Right cardiac atrium (tissue), 5 donors: ENCODE measurements at regions of chr12 and their contacts with region 1.

Region 1: GRCh38 chr12:95217377-95218149 is at the starts of genes FGD6 and VEZT:
- DNase-seq: peak; percentile 99
- ATAC-seq: peak; percentile 97 to 98
- H3K4me3 ChIP-seq: peak within 1 kb of the TSS; percentile 87
- H3K27ac ChIP-seq: peak within 1 kb of the TSS; percentile 87
- H3K4me1 ChIP-seq: no peaks in the 10 kb centered on the region
- H3K27me3 ChIP-seq: no peaks in the 10 kb centered on the region
- total RNA-seq, gene FGD6: 18.9 to 23.8 (median 20.8) TPM
- total RNA-seq, gene VEZT: 58.9 to 78.6 (median 69.9) TPM

Region 2: GRCh38 chr12:95117178-95117599 is 100.4 kb before region 1 on chr12:
- intact Hi-C with region 1: loop called in 2 of 4 experiments (anchors 5 kb)
- DNase-seq: peak in 2 of 3 donors; percentile 61 to 74
- ATAC-seq: peak; percentile 91 to 92
- H3K4me3 ChIP-seq: no peak overlapping the region
- H3K27ac ChIP-seq: no peak overlapping the region
- H3K4me1 ChIP-seq: peaks cover 5% of the 10 kb centered on the region
- H3K27me3 ChIP-seq: no peaks in the 10 kb centered on the region

Region 3: GRCh38 chr12:95151821-95152220 is 65.7 kb before region 1 on chr12:
- intact Hi-C with region 1: loop called in 1 of 4 experiments (anchors 10 kb)
- DNase-seq: no peak
- ATAC-seq: no peak
- H3K4me3 ChIP-seq: no peak overlapping the region
- H3K27ac ChIP-seq: no peak overlapping the region
- H3K4me1 ChIP-seq: no peaks in the 10 kb centered on the region
- H3K27me3 ChIP-seq: no peaks in the 10 kb centered on the region

Region 4: DNA sequence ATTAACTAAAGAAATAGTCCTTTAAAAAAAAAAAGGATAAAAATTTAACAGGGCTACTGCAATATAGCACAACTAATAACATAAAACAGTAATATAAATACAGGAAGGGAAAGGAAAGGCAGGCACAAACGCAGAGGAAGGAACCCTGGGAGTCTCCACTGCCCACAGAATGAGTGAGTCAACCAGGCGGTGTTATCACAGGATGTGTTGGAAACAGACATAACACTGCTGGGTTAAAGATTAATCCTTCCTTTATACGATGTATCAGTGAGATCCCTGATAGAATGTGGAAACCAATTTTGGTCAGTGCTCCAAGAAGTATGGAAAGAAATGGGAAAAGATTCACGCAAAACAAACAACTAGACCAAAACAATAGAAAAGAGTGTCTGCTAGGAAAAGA is 48.2 kb before region 1 on chr12:
- intact Hi-C with region 1: loop called in 2 of 4 experiments (anchors 10 kb)
- DNase-seq: no peak
- ATAC-seq: peak; percentile 68 to 81
- H3K4me3 ChIP-seq: no peak overlapping the region
- H3K27ac ChIP-seq: no peak overlapping the region
- H3K4me1 ChIP-seq: peaks cover 6% of the 10 kb centered on the region
- H3K27me3 ChIP-seq: no peaks in the 10 kb centered on the region

Region 5: DNA sequence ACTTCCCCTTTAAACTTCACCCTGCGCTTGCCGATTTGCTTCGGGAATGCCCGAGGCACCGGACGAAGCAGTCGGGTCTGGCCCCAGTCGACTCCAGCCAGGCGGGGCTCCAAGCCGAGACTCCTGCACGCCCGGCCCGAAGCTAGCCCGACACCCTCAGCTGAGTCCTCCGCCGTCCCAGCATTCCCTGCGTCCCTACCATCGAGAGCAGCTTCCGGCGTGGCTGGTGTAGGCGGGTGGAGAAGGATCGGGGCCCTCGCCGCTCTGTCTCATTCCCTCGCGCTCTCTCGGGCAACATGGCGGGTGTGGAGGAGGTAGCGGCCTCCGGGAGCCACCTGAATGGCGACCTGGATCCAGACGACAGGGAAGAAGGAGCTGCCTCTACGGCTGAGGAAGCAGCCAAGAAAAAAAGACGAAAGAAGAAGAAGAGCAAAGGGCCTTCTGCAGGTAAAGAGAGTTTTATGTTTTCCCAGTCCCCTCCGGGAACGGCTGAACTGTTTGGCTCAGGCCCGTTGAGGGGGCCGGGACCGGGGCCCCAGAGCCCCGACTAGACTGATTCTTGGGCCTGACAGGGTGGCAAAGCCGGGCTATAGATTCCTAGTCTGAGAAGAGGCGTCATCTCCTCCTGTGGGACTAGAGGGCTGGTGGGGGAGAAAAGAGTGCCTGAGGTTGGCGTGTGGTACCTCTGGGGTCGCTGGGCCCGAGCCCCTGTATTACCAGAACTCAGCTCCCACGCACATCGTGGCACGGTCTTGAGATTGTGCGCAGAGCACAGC is 256.5 kb after region 1 on chr12 and contains the start of gene METAP2:
- intact Hi-C with region 1: loop called in 1 of 4 experiments (anchors 5 kb)
- DNase-seq: peak; percentile 97 to 98 (median 98)
- ATAC-seq: peak; percentile 100
- H3K4me3 ChIP-seq: peak within 1 kb of the TSS; percentile 93
- H3K27ac ChIP-seq: peak within 1 kb of the TSS; percentile 74
- H3K4me1 ChIP-seq: no peaks in the 10 kb centered on the region
- H3K27me3 ChIP-seq: no peaks in the 10 kb centered on the region
- total RNA-seq, gene METAP2: 57.6 to 70.3 (median 67.2) TPM

Region 6: GRCh38 chr12:95557625-95558024 is 340.1 kb after region 1 on chr12:
- intact Hi-C with region 1: no loop called
- DNase-seq: no peak
- ATAC-seq: no peak
- H3K4me3 ChIP-seq: no peak overlapping the region
- H3K27ac ChIP-seq: no peak overlapping the region
- H3K4me1 ChIP-seq: no peaks in the 10 kb centered on the region
- H3K27me3 ChIP-seq: no peaks in the 10 kb centered on the region